CD4-positive, alpha-beta memory T cell (primary cell): ENCODE measurements at regions of chr4 and their contacts with region 1.

Region 1: DNA sequence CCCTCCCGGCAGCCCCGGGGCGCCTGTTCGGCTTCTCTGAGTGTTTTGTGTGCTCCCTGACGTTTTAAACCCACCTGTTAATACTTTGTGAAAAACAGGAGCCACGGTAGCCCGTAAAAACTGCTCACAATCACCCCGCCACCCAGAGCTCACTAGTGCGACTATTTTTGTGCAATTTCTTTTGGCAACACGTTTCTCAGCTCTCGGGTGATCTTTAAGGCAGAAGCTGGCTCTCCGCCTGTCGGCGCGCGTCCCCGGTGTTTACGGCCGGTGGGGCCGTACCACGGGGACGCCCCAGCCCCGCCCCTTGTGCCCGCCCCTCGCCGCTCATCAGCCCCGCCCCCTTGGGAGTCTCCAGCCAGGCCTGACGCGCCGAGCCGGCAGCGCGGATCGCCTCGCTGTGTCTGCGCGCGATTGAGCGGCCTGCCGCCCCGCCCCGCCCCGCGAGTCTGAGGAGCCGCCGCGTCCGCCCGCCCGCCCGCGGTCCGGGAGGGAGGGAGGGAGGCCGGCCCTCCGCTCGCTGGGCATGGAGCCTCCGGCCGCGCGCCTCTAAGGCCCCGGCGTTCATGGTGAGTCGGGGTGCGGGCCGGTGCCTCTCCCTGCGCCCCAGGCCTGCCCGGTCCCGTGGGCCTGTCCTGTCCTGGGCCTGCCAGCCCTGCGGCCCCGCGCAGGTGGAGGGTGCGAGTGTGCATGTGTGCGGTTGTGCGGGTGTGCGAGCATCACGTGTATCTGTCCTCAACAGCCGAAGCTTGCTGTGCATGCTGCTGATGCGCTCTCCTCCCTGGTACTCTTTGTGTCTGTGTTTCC is 56.2 kb upstream of the TADA2B start:
- DNase-seq: peak; percentile 90 to 93 (median 92)
- H3K4me3 ChIP-seq: peak overlapping the region; percentile 65 to 83
- H3K4me3 Mint-ChIP-seq: peak overlapping the region; percentile 94 to 99 (median 95)
- H3K27ac ChIP-seq: peak overlapping the region; percentile 90
- H3K27ac Mint-ChIP-seq: peak overlapping the region; percentile 95 to 98 (median 96)
- H3K4me1 ChIP-seq: peaks cover 78% of the 10 kb centered on the region
- H3K4me1 Mint-ChIP-seq: peaks cover 57 to 86% (median 70%) of the 10 kb centered on the region in 4 donors
- H3K27me3 ChIP-seq: no peaks in the 10 kb centered on the region
- H3K27me3 Mint-ChIP-seq: no peaks in the 10 kb centered on the region

Region 2: DNA sequence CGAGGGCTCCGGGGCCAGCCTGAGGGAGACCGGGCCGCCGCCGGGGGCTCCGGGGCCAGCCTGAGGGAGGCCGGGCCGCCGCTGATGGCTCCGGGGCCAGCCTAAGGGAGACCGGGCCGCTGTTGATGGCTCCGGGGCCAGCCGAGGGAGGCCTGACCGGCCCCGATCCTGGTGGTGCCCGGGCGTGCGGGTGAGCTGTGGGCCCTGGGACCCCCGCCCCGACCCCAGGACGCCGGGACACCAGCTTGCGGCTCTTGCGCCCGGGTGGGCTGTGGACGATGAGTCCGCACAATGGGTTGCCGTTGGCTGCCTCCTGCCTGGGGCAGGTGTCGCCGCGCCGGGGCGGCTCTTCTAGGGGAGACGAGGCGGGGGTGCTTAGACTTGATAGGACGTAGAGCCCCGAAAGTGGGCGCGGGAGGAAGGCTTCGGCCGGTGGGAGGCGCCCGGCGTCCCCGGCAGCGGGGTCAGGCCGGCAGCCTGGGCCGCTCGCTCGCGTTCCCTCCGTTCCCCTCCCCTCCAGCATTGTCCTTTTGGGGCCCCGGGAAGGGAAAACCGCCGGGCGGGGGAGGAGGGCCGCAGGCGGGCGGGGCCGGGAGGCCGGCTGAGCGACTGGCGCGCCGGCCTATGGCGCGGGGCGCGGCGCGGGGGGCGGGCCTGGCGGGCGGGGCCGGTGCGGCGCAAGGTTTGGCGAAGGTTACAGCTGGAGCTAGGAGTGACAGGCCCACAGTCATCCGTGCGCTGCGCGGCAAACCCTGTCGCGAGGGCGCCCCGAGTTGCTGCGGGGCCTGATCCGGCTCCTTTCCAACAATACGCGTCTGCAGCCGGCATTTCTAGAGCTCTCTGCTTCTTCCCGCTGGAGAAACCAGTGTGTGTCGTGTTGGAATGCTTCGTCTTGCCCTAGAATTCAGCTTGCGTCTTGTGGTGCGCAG is 203.7 kb before region 1 on chr4:
- CTCF ChIA-PET with region 1: interaction called, 4 read pairs
- POLR2A ChIA-PET with region 1: no interaction called
- intact Hi-C with region 1: loop called (anchors 1 kb)
- DNase-seq: peak; percentile 87 to 89 (median 88)
- H3K4me3 ChIP-seq: peak overlapping the region; percentile 38 to 71
- H3K4me3 Mint-ChIP-seq: peak overlapping the region; percentile 84 to 92 (median 88)
- H3K27ac ChIP-seq: peak overlapping the region; percentile 96
- H3K27ac Mint-ChIP-seq: peak overlapping the region; percentile 88 to 93 (median 91)
- H3K4me1 ChIP-seq: peaks cover 44% of the 10 kb centered on the region
- H3K4me1 Mint-ChIP-seq: peaks cover 32 to 61% (median 47%) of the 10 kb centered on the region in 4 donors
- H3K27me3 ChIP-seq: no peaks in the 10 kb centered on the region
- H3K27me3 Mint-ChIP-seq: no peaks in the 10 kb centered on the region

Region 3: DNA sequence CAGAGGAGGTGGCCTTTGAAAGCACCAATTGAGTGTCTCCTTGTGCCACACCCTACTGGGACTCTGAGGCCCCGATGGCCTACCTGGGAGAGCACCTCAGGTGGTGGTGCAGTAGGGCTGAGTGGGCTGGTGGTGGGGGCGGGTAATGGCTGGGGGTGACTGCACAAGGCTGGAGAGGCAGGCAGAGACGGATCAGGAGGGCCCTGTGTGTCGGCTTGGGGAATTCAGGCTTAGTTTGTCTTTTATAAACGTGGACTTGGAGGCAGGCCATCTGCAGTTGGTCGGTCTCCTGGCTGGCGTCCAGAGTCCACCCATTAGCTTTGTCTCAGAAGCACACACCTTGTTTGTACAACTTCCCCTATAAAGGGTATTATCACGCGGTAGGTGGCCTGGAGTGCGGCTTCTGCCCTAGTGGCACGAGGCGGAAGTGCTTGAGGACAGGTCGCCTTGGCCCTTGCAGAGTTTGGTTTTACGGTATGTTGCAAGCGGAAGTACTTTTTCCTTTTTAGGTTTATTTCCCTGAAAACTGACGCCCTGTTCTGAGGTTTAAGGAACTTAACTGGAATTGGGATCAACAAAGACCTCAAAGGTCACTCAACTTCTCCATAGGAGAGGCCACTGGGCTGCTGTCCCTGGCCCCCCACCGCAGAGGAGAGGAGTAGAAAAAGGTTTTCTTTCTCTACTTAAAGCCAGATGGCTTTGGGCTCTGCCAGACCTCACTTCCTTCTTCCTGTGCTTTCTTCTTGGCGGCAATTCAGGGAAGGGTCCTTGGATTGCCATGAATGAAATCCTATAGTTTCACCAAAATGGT is 69.3 kb before region 1 on chr4:
- CTCF ChIA-PET with region 1: interaction called, 6 read pairs
- POLR2A ChIA-PET with region 1: interaction called, 98 read pairs
- intact Hi-C with region 1: no loop called
- DNase-seq: peak in 1 of 5 donors; percentile 34
- H3K4me3 ChIP-seq: peak overlapping the region in 1 of 2 donors; percentile 47
- H3K4me3 Mint-ChIP-seq: peak overlapping the region; percentile 32 to 85 (median 66)
- H3K27ac ChIP-seq: peak overlapping the region; percentile 67
- H3K27ac Mint-ChIP-seq: peak overlapping the region; percentile 94 to 98 (median 96)
- H3K4me1 ChIP-seq: peaks cover 81% of the 10 kb centered on the region
- H3K4me1 Mint-ChIP-seq: peaks cover 54 to 89% (median 73%) of the 10 kb centered on the region in 4 donors
- H3K27me3 ChIP-seq: no peaks in the 10 kb centered on the region
- H3K27me3 Mint-ChIP-seq: no peaks in the 10 kb centered on the region

Region 4: DNA sequence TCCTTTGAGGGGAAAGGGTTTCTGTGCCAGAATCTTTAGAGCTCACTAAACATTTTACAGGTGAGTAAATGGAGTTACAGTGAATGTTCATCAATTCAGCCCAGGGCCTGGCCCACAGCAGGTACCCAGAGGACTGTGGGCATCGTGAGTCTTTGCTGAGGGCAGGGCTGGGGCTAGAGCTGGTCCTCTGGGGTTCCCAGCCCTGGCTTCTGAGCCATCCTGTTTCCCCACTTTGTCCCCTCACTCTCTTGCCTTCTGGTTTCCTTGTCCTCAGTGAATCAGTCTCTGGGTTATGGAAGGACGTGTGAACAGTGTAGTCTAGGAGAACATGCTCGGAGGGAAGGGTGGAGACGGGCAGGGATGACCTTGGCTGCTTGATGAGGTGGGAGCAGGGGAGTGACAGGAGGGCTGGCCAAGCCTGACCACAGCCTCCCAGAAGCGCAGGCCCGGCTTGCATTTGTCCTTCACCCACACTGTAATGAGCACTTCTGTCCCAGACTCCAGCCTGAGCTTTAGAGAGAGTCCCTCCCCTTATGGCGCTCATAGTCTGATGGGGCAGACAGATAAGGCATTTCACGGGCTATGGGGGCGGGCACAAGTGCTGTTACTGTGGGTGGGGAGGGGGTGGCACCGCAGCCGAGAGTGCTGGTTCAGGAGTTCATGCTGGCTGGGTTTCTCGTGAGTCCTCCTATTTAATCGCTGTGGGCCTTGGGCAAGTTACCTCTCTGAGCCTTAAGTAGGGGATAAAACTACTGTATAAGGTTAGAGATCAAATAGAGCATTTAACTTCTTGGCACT is 60.1 kb before region 1 on chr4:
- CTCF ChIA-PET with region 1: interaction called, 3 read pairs
- POLR2A ChIA-PET with region 1: interaction called, 16 read pairs
- intact Hi-C with region 1: no loop called
- DNase-seq: peak; percentile 43 to 86 (median 55)
- H3K4me3 ChIP-seq: peak overlapping the region; percentile 31 to 33
- H3K4me3 Mint-ChIP-seq: peak overlapping the region; percentile 74 to 88 (median 82)
- H3K27ac ChIP-seq: peak overlapping the region; percentile 6
- H3K27ac Mint-ChIP-seq: peak overlapping the region; percentile 82 to 94 (median 91)
- H3K4me1 ChIP-seq: peaks cover 57% of the 10 kb centered on the region
- H3K4me1 Mint-ChIP-seq: peaks cover 68 to 91% (median 77%) of the 10 kb centered on the region in 4 donors
- H3K27me3 ChIP-seq: no peaks in the 10 kb centered on the region
- H3K27me3 Mint-ChIP-seq: no peaks in the 10 kb centered on the region

Region 5: GRCh38 chr4:6942238-6942800 is 44.7 kb before region 1 on chr4:
- CTCF ChIA-PET with region 1: interaction called, 4 read pairs
- POLR2A ChIA-PET with region 1: interaction called, 16 read pairs
- intact Hi-C with region 1: loop called (anchors 1 kb)
- DNase-seq: peak; percentile 57 to 65 (median 63)
- H3K4me3 ChIP-seq: peak overlapping the region; percentile 25 to 30
- H3K4me3 Mint-ChIP-seq: peak overlapping the region; percentile 73 to 92 (median 82)
- H3K27ac ChIP-seq: peak overlapping the region; percentile 52
- H3K27ac Mint-ChIP-seq: peak overlapping the region; percentile 88 to 98 (median 89)
- H3K4me1 ChIP-seq: peaks cover 79% of the 10 kb centered on the region
- H3K4me1 Mint-ChIP-seq: peaks cover 54 to 87% (median 72%) of the 10 kb centered on the region in 4 donors
- H3K27me3 ChIP-seq: no peaks in the 10 kb centered on the region
- H3K27me3 Mint-ChIP-seq: no peaks in the 10 kb centered on the region

Region 6: GRCh38 chr4:6974138-6974848 is 12.7 kb before region 1 on chr4:
- CTCF ChIA-PET with region 1: interaction called, 21 read pairs
- POLR2A ChIA-PET with region 1: interaction called, 24 read pairs
- intact Hi-C with region 1: loop called (anchors 1 kb)
- DNase-seq: peak; percentile 73 to 83 (median 76)
- H3K4me3 ChIP-seq: no peak overlapping the region
- H3K4me3 Mint-ChIP-seq: no peak overlapping the region
- H3K27ac ChIP-seq: no peak overlapping the region
- H3K27ac Mint-ChIP-seq: peak overlapping the region; percentile 48 to 86 (median 72)
- H3K4me1 ChIP-seq: peaks cover 9% of the 10 kb centered on the region
- H3K4me1 Mint-ChIP-seq: peaks cover 18 to 35% (median 19%) of the 10 kb centered on the region in 4 donors
- H3K27me3 ChIP-seq: no peaks in the 10 kb centered on the region
- H3K27me3 Mint-ChIP-seq: no peaks in the 10 kb centered on the region

Region 7: DNA sequence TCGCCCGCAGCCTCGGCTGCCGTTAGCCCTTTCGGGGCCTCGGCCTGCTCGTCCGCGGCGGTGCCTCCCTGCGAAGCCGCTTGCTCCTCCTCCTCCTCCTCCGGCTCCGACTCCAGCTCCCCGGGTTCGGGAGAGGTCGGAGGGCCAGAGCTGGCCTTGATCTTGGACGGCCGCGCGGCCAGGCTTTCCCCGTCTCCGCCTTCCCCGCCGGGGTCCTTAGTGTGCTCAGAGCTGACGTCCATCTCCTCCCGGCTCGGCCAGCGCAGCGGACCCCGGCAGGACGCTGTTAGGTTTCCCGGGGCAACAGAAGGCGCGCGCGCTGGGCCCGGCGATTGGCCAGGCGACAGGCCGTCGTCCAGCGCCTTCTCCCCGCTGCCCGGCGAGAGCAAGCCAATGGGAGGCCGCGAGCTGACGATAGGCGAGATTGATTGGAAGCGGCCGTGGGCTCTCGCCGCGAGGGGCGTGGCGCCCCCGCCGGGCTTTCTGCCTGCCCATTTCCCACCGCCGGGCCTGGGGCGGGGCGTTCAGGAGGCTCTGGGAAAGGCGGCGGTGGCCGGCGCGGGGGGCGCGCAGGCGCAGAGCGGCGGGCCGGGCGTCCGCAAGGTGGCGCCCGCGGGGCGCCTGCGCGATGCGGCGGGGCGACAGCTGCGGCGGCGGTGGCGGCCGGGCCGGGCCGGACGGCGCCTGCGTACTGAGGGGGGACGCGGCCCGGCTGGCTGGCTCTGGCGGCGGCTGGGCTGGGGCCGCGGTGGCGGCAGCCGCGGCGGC is 55.9 kb after region 1 on chr4 and contains the start of gene TADA2B:
- CTCF ChIA-PET with region 1: no interaction called
- POLR2A ChIA-PET with region 1: interaction called, 26 read pairs
- intact Hi-C with region 1: loop called (anchors 1 kb)
- DNase-seq: peak; percentile 90 to 94 (median 91)
- H3K4me3 ChIP-seq: peak within 1 kb of the TSS; percentile 83 to 91
- H3K4me3 Mint-ChIP-seq: peak within 1 kb of the TSS; percentile 89 to 97 (median 93)
- H3K27ac ChIP-seq: peak within 1 kb of the TSS; percentile 75
- H3K27ac Mint-ChIP-seq: peak within 1 kb of the TSS; percentile 81 to 95 (median 91)
- H3K4me1 ChIP-seq: peaks cover 45% of the 10 kb centered on the region
- H3K4me1 Mint-ChIP-seq: peaks cover 33 to 61% (median 40%) of the 10 kb centered on the region in 4 donors
- H3K27me3 ChIP-seq: no peaks in the 10 kb centered on the region
- H3K27me3 Mint-ChIP-seq: no peaks in the 10 kb centered on the region
- total RNA-seq, gene TADA2B: 46.4 to 49.0 TPM

Region 8: GRCh38 chr4:7156761-7157488 is 169.9 kb after region 1 on chr4:
- CTCF ChIA-PET with region 1: no interaction called
- POLR2A ChIA-PET with region 1: no interaction called
- intact Hi-C with region 1: no loop called
- DNase-seq: no peak
- H3K4me3 ChIP-seq: no peak overlapping the region
- H3K4me3 Mint-ChIP-seq: no peak overlapping the region
- H3K27ac ChIP-seq: no peak overlapping the region
- H3K27ac Mint-ChIP-seq: no peak overlapping the region
- H3K4me1 ChIP-seq: no peaks in the 10 kb centered on the region
- H3K4me1 Mint-ChIP-seq: no peaks in the 10 kb centered on the region
- H3K27me3 ChIP-seq: no peaks in the 10 kb centered on the region
- H3K27me3 Mint-ChIP-seq: peaks cover 14 to 31% of the 10 kb centered on the region in 2 donors